Activated naive CD4-positive, alpha-beta T cell treated with anti-CD3 and anti-CD28 coated beads for 36 hours (primary cell): ENCODE measurements at regions of chr6 and their contacts with region 1.

Region 1: GRCh38 chr6:43308101-43308989 is at the start of gene CRIP3:
- DNase-seq: peak; percentile 67
- H3K4me3 Mint-ChIP-seq: peak within 1 kb of the TSS; percentile 82
- H3K27ac Mint-ChIP-seq: no peak within 1 kb of the TSS
- H3K4me1 Mint-ChIP-seq: peaks cover 6% of the 10 kb centered on the region
- H3K27me3 Mint-ChIP-seq: peaks cover 2% of the 10 kb centered on the region
- total RNA-seq, gene CRIP3: 2.9 to 3.1 TPM

Region 2: GRCh38 chr6:43297644-43298564 is 10.4 kb before region 1 on chr6 and contains the start of gene SLC22A7:
- CTCF ChIA-PET with region 1: interaction called, 23 read pairs
- intact Hi-C with region 1: no loop called
- DNase-seq: no peak
- H3K4me3 Mint-ChIP-seq: no peak within 1 kb of the TSS
- H3K27ac Mint-ChIP-seq: no peak within 1 kb of the TSS
- H3K4me1 Mint-ChIP-seq: no peaks in the 10 kb centered on the region
- H3K27me3 Mint-ChIP-seq: no peaks in the 10 kb centered on the region
- total RNA-seq, gene SLC22A7: not detected

Region 3: GRCh38 chr6:43395776-43396175 is 87.4 kb after region 1 on chr6:
- CTCF ChIA-PET with region 1: interaction called, 11 read pairs
- intact Hi-C with region 1: loop called (anchors 5 kb)
- DNase-seq: no peak
- H3K4me3 Mint-ChIP-seq: no peak overlapping the region
- H3K27ac Mint-ChIP-seq: no peak overlapping the region
- H3K4me1 Mint-ChIP-seq: peaks cover 12% of the 10 kb centered on the region
- H3K27me3 Mint-ChIP-seq: no peaks in the 10 kb centered on the region

Region 4: GRCh38 chr6:43402820-43403219 is 94.5 kb after region 1 on chr6:
- CTCF ChIA-PET with region 1: interaction called, 11 read pairs
- intact Hi-C with region 1: loop called (anchors 5 kb)
- DNase-seq: no peak
- H3K4me3 Mint-ChIP-seq: no peak overlapping the region
- H3K27ac Mint-ChIP-seq: no peak overlapping the region
- H3K4me1 Mint-ChIP-seq: peaks cover under 1% of the 10 kb centered on the region
- H3K27me3 Mint-ChIP-seq: peaks cover 2% of the 10 kb centered on the region

Region 5: DNA sequence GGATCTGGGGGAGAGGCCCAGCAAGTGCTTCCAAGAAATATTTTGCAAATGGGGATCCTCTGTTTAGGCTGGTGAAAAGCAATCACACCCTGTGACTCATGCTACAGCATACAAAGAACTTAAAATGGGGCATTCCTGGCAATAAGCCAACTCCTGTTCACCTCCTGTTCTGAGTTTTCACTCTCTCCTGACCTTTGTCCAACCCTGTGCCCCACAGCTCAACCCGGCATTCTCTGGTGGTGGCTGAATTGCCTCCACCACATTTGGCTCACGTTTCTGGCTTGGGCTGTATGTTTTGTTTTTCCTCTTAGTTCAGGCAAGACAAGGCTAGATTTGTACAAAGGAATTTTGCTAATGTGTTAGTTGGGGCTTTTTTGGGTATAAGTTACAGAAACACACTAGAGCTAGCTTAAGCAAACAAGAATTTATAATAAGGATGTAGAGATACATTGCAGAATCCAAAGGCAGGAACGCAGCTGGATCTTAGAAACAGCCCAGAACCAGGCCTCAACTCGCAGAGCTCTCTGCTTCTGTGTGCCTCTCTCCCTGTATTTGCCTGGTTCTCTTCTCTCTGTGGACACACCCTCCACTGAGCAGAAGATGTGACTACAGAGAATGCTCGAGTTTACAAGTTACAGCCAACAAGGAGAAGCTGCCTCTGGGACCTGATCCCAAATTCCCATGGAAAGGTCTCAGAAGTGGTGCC is 128.4 kb after region 1 on chr6:
- CTCF ChIA-PET with region 1: no interaction called
- intact Hi-C with region 1: no loop called
- DNase-seq: no peak
- H3K4me3 Mint-ChIP-seq: no peak overlapping the region
- H3K27ac Mint-ChIP-seq: no peak overlapping the region
- H3K4me1 Mint-ChIP-seq: peaks cover 3% of the 10 kb centered on the region
- H3K27me3 Mint-ChIP-seq: no peaks in the 10 kb centered on the region